ENCODE measurements at regions of chr3 and their contacts with region 1.

Region 1: DNA sequence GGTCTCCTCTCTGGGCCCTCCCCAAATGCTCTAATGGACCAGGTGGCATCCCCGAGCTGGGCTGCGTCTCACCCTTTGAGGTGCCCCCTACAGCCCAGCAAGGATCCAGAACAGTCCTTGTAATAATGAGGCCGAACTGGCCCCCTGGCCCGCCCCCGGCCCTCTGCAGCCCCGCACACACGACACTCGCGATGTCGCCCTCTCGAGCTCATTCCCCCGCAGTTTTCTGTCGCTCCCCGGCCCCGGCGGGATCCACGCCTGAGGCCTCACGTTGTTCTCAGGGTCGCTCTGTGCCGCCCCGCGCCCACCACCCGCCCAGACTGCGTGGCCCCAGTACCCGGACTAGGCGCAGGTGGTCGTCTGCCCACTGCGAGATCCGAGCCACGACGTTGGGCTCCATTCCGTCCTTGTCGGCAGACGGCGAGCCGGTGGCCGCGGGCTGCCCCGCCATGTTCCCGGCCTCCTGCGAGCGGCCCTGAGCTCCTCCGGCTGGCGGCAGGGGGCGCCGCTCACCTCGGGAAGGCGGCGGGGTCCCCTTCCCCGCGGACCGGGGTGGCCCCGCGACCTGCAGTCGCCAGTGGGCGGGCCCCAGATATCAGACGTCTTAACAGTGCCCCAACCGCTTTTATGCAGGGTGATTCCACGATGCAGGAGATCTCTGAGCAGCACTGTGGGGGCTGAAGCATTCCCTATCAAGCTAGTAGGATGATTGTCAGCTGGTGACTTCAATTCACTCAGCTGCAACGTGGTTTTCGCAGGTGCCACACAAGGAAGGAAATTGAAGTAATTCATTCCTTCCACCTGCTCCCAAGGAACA is at the start of gene C3orf33:
- DNase-seq: peak; percentile 43 to 86 (median 67)
- ATAC-seq: peak; percentile 96 to 97 (median 96)
- H3K4me3 ChIP-seq: peak within 1 kb of the TSS; percentile 78 to 79
- H3K4me3 Mint-ChIP-seq: peak within 1 kb of the TSS; percentile 82 to 88 (median 86)
- H3K27ac ChIP-seq: peak within 1 kb of the TSS; percentile 73
- H3K27ac Mint-ChIP-seq: peak within 1 kb of the TSS; percentile 45 to 86
- H3K4me1 ChIP-seq: peaks cover 3 to 12% of the 10 kb centered on the region in 2 experiments
- H3K4me1 Mint-ChIP-seq: peaks cover 18 to 25% (median 18%) of the 10 kb centered on the region in 3 donors
- H3K27me3 ChIP-seq: peaks cover 0 to 4% of the 10 kb centered on the region in 2 experiments
- H3K27me3 Mint-ChIP-seq: peaks cover 5 to 15% of the 10 kb centered on the region in 2 donors
- total RNA-seq, gene C3orf33: 1.2 to 3.2 (median 2.3) TPM

Region 2: DNA sequence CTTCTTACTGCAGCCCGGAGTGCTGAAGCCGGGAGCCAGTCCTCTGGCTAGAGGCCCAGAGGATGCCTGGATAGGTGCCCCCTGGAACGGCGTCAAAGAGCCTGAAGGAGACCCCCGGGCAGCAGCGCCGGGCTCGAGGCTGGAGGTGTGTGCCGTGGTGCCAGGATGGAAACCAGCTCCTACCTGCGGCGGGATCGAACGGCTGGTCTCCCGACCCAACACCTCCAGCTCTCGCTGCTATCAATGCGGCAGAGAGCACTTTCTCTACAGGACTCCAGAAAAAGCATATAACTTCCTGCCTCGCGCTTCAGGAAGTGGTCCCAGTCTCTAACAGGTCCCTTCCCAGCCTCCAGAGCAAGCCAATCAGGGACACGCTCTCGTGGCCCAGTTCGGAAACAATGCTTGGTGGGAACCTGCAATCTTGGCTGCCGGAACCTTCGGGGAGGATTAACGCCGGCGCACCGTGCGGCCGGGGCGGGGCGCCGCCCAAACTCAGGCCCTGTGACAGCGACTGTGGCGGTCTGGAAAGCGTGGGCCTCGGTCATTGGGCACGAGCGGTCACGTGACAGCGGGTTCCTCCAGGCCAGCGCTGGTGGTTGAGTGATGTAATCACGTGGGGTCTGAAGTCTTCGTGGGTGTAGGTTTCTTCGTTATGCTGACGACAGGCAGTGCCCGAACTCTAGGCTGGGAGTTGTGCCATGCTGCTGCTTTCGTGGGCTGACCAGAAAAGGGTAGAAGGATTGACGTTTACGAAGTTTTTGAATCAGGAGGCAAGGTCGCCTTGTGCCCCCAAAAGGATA is 48.3 kb after region 1 on chr3 and contains the start of gene SLC33A1:
- CTCF ChIA-PET with region 1: interaction called, 3 to 24 read pairs
- POLR2A ChIA-PET with region 1: interaction called, 3 to 13 read pairs
- DNase-seq: peak; percentile 96 to 100 (median 99)
- ATAC-seq: peak; percentile 90 to 93 (median 91)
- H3K4me3 ChIP-seq: peak within 1 kb of the TSS; percentile 89 to 99
- H3K4me3 Mint-ChIP-seq: peak within 1 kb of the TSS; percentile 94 to 98 (median 97)
- H3K27ac ChIP-seq: peak within 1 kb of the TSS; percentile 97
- H3K27ac Mint-ChIP-seq: peak within 1 kb of the TSS; percentile 100
- H3K4me1 ChIP-seq: peaks cover 23 to 49% of the 10 kb centered on the region in 2 experiments
- H3K4me1 Mint-ChIP-seq: peaks cover 36 to 46% (median 42%) of the 10 kb centered on the region in 3 donors
- H3K27me3 ChIP-seq: no peaks in the 10 kb centered on the region
- H3K27me3 Mint-ChIP-seq: no peaks in the 10 kb centered on the region
- total RNA-seq, gene SLC33A1: 17.4 to 33.1 (median 28.5) TPM

Region 3: DNA sequence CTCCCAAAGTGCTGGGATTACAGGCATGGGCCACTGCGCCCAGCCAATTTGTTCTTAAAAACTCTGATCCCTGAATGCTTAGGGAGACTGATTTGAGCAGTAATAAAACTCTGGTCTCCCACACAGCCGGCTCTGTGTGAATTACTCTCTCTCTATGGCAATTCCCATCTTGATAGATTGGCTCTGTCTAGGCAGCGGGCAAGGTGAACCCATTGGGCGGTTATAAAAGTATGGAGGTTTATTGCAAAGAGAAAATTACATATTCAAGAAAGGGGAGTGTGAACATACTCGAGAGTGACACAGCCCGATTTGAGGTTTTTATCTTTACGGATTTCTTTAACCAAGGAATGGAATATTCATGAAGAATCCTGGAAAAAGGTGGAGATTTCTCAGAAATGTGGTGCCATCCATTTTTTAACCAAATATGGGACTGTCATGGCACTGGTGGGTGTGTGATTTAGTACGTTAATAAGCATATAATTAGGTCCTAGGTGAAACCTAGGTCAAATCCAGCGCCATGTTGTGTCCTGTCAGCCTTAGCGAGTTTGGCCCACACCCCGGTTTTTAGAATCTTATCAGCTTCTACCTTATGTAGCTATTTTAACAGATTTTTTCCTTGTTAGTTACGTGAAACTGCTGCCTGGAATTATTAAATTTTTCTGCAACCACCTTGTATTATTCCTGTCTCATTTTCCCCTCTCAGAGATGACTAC is 57.2 kb after region 1 on chr3:
- CTCF ChIA-PET with region 1: interaction called, 7 to 13 read pairs
- POLR2A ChIA-PET with region 1: interaction called in 1 of 2 experiments, 3 read pairs
- DNase-seq: no peak
- ATAC-seq: peak in 1 of 4 experiments; percentile 9
- H3K4me3 ChIP-seq: no peak overlapping the region
- H3K4me3 Mint-ChIP-seq: no peak overlapping the region
- H3K27ac ChIP-seq: peak overlapping the region; percentile 72
- H3K27ac Mint-ChIP-seq: peak overlapping the region; percentile 82 to 84
- H3K4me1 ChIP-seq: peaks cover 0 to 12% of the 10 kb centered on the region in 2 experiments
- H3K4me1 Mint-ChIP-seq: peaks cover 0 to 24% (median 16%) of the 10 kb centered on the region in 3 donors
- H3K27me3 ChIP-seq: no peaks in the 10 kb centered on the region
- H3K27me3 Mint-ChIP-seq: no peaks in the 10 kb centered on the region

Region 4: GRCh38 chr3:155870133-155870944 is 64.3 kb after region 1 on chr3 and contains the start of gene GMPS:
- CTCF ChIA-PET with region 1: interaction called, 7 to 44 read pairs
- POLR2A ChIA-PET with region 1: interaction called in 1 of 2 experiments, 8 read pairs
- DNase-seq: peak; percentile 86 to 98 (median 94)
- ATAC-seq: peak; percentile 91 to 94 (median 92)
- H3K4me3 ChIP-seq: peak within 1 kb of the TSS; percentile 67 to 80
- H3K4me3 Mint-ChIP-seq: peak within 1 kb of the TSS; percentile 92 to 96 (median 95)
- H3K27ac ChIP-seq: peak within 1 kb of the TSS; percentile 93
- H3K27ac Mint-ChIP-seq: peak within 1 kb of the TSS; percentile 96 to 97
- H3K4me1 ChIP-seq: peaks cover 9 to 23% of the 10 kb centered on the region in 2 experiments
- H3K4me1 Mint-ChIP-seq: peaks cover 20 to 32% (median 31%) of the 10 kb centered on the region in 3 donors
- H3K27me3 ChIP-seq: no peaks in the 10 kb centered on the region
- H3K27me3 Mint-ChIP-seq: no peaks in the 10 kb centered on the region
- total RNA-seq, gene GMPS: 37.4 to 44.1 (median 40.6) TPM

Region 5: DNA sequence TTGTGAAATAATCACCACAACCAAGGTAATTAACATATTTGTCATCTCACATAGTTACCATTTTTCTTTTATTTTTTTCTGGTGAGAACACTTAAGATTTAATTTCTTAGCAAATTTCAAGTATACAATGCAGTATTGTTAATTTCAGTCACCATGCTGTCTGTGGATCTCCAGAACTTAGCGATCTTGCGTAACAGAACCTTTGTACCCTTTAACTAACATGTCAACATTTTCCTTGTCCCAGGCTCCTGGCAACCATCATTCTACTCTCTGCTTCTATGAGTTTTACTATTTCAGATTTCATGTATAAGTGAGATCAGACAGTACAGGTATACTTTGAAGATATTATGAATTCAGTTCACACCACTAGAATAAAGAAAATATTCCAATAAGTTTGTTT is 468.8 kb after region 1 on chr3:
- CTCF ChIA-PET with region 1: no interaction called
- POLR2A ChIA-PET with region 1: no interaction called
- DNase-seq: no peak
- ATAC-seq: no peak
- H3K4me3 ChIP-seq: no peak overlapping the region
- H3K4me3 Mint-ChIP-seq: no peak overlapping the region
- H3K27ac ChIP-seq: no peak overlapping the region
- H3K27ac Mint-ChIP-seq: no peak overlapping the region
- H3K4me1 ChIP-seq: no peaks in the 10 kb centered on the region
- H3K4me1 Mint-ChIP-seq: no peaks in the 10 kb centered on the region
- H3K27me3 ChIP-seq: peaks cover 0 to 11% of the 10 kb centered on the region in 2 experiments
- H3K27me3 Mint-ChIP-seq: peaks cover 4 to 20% of the 10 kb centered on the region in 2 donors